Heart left ventricle (tissue), 16 donors: ENCODE measurements at regions of chr17 and their contacts with region 1.

Region 1: GRCh38 chr17:79859676-79860615 is 20.7 kb upstream of the CBX4 start:
- DNase-seq: peak in 1 of 5 donors; percentile 55
- ATAC-seq: no peak
- H3K4me3 ChIP-seq: no peak overlapping the region
- H3K27ac ChIP-seq: no peak overlapping the region
- H3K4me1 ChIP-seq: peaks cover 0 to 4% (median 0%) of the 10 kb centered on the region in 12 donors
- H3K27me3 ChIP-seq: peaks cover 0 to 44% (median 10%) of the 10 kb centered on the region in 9 donors
- CTCF ChIP-seq: no peak
- POLR2A ChIP-seq: no peak

Region 2: DNA sequence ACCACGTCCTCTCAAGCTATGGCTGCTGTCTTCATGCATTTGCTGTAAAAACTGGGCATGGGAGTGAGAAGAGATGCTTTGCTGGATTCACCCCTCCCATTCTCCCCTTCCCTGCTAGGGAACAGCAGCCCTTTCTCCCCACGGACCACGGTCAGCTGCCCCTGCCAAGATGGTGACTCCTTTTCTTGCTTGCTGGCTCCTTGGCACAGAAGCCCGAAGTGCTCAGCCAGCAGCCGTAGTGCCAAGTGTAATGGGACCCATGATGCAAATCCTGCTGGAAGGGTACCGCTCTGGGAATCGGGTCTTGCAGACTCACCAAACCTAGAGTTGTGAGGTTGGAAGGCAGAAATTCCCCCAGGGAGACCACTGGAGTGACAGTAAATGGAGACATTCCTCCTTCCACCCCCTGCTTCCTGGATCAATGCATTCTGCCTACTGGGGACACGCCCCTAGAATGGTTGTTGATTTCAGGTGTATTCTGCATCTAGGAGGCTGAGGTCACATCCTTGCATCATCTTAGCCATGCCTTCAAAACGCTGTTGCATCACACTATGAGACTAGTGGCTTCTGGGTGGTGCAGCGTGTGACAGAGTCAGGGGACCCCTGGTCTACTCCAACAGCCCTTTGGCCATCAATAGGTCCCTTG is 42.3 kb after region 1 on chr17:
- intact Hi-C with region 1: loop called in 1 of 10 experiments (anchors 5 kb)
- DNase-seq: no peak
- ATAC-seq: no peak
- H3K4me3 ChIP-seq: no peak overlapping the region
- H3K27ac ChIP-seq: no peak overlapping the region
- H3K4me1 ChIP-seq: no peaks in the 10 kb centered on the region
- H3K27me3 ChIP-seq: peaks cover 0 to 41% (median 5%) of the 10 kb centered on the region in 9 donors
- CTCF ChIP-seq: no peak
- POLR2A ChIP-seq: no peak